ENCODE measurements at regions of chr16 and their contacts with region 1.

Region 1: GRCh38 chr16:5234295-5235050 is 136.9 kb upstream of the EEF2KMT start:
- DNase-seq: no peak
- ATAC-seq: no peak

Region 2: DNA sequence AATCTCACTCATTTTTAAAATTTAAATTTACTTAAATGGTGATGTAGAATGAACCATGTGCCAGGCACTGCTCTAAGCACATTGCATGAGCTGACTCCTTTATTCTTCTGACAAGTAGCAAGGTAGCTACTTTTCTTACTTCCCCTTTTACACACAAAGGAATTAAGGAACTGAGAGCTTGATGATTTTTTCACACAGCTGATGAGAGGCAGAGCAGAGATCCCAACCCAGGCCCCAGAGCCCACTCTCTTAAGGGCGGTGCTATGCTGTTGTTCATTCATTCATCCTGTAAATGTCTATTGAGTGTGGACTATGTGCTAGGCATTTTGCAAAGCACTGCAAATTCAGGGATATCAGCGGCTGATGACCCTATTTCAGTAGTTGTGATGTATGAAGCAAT is 258.4 kb before region 1 on chr16:
- intact Hi-C with region 1: no loop called
- DNase-seq: no peak
- ATAC-seq: no peak

Region 3: DNA sequence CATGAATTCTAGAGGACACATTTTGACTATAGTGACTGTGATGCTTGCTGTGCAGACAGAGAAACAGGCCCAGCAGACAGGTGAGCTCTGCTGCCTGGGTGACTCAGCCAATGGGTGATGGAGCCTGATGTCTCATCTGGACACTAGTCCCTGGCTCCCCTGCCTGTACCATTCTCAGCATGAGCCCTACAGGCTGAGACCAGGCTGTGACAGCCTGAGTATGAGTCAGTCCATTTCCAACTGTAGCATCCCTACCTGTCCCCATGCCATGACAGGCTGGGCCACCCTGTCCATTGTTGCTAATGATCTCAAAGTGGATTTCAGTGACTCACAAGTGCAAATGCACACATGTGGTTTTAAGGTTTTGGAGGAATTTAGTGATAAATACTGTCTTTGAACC is 34.4 kb before region 1 on chr16:
- intact Hi-C with region 1: no loop called
- DNase-seq: no peak
- ATAC-seq: no peak

Region 4: DNA sequence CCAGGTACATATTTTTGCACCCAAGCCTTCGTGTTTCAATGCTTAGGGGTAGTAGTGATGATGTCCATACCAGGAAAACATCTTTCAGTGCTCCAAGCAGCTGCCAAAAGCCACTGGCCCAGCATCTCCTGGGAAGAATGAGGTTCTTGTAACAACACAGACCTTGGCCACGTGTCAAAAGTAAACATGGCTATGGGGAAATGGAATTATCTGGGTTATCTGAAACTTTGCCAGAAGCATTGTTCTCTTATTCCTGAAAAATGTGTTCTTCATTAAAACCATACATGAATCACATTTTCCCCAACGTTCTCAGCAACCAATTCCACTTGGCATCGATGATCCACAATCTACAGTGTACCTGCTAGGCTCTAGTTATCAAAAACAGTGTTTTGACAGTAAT is 387.4 kb after region 1 on chr16:
- intact Hi-C with region 1: loop called in 1 of 2 experiments (anchors 10 kb)
- DNase-seq: peak; percentile 46
- ATAC-seq: no peak

Measured in left cardiac atrium (tissue), 4 donors.